K562 (cell line): ENCODE measurements at regions of chr11 and their contacts with region 1.

Region 1: DNA sequence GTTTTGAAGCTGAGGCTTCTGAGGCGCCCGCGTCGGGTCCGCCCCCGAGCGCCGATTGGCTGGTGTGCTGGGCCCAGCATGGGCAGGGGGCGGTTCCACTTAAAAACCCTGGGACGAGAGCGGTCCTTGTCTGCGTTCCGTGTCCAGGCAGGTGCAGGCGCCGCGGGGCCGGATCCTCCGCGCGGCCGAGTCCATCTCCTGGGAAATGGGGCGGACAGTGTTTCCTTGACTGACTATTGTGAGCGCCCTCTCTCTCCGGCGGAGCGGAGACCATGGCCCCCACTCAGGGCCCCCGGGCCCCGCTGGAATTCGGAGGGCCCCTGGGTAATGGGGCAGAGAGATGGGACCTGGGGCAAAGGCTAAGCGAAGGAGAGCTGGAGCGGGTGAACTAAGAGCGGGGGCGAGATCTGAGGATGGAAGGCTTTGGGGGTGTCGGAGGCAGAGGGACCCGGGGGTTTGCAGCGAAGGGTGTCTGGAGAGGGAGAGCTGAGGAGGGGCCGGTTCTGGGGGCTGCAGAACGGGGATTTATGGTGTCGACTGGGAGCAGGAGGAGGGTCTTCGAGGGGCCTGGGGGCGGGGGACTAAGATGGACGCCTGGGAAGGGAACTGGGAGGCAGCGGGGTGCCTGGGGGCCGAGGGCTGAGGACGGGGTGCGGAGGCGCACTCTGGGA is at the start of gene TM7SF2:
- DNase-seq: peak; percentile 96 to 99 (median 98)
- ATAC-seq: peak; percentile 90
- H3K4me3 ChIP-seq: peak within 1 kb of the TSS; percentile 44
- H3K27ac ChIP-seq: peak within 1 kb of the TSS; percentile 79
- H3K4me1 ChIP-seq: peaks cover 29 to 62% of the 10 kb centered on the region in 2 experiments
- H3K27me3 ChIP-seq: no peaks in the 10 kb centered on the region
- CTCF ChIP-seq: 0 out of 6 replicates have a peak, but pooled peaks of 1 of the 3 experiments have one; percentile 0
- EP300 ChIP-seq: no peak
- POLR2A ChIP-seq: peak; percentile 88
- RAD21 ChIP-seq: no peak
- polyA plus RNA-seq, gene TM7SF2: 1.2 to 1.4 TPM

Region 2: DNA sequence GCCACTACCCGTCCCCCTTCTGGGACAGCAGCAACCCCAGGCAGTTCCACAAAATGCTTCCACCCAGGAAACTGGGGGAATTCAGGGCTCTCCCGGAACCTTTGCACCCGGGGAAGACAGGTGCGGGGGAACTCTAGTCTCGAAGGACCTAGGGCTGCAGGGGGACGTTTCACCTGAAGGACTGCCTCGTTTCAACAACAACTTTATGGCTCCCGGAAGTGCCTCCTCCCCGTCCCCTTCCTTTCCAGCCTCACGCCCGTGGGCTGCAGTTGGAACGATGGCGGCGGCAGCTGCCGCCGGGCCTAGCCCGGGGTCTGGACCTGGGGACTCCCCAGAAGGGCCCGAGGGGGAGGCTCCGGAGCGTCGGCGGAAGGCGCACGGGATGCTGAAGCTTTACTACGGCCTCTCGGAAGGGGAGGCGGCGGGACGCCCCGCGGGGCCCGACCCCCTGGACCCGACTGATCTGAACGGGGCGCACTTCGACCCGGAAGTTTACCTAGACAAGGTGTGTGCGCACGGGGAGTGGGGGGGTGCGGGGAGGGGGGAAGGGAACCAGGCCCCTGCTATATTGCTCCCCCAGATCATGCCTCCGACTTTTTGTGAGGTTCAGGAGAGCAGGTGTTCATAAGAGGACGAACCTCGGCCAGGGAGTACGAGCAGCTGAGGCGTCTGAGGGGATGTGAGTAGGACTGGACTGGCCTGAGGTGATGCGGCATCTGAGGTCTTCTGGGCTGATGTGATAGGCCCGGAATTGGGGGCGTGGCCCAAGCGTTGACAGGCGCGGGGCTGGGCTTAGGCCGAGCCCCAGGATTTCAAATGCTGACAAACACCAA is 15.7 kb before region 1 on chr11 and contains the start of gene VPS51:
- CTCF ChIA-PET with region 1: no interaction called
- POLR2A ChIA-PET with region 1: interaction called, 92 read pairs
- in situ Hi-C with region 1: no loop called
- intact Hi-C with region 1: no loop called
- DNase-seq: peak; percentile 93 to 96 (median 94)
- ATAC-seq: peak; percentile 100
- H3K4me3 ChIP-seq: peak within 1 kb of the TSS; percentile 78
- H3K27ac ChIP-seq: peak within 1 kb of the TSS; percentile 81
- H3K4me1 ChIP-seq: peaks cover 11 to 14% of the 10 kb centered on the region in 2 experiments; a peak in 4 of 5 replicates
- H3K27me3 ChIP-seq: no peaks in the 10 kb centered on the region
- CTCF ChIP-seq: 0 out of 6 replicates have a peak, but pooled peaks of 1 of the 3 experiments have one; percentile 7
- EP300 ChIP-seq: peak; percentile 70
- POLR2A ChIP-seq: peak; percentile 94
- RAD21 ChIP-seq: 0 out of 4 replicates have a peak, but pooled peaks of 1 of the 2 experiments have one; percentile 14
- polyA plus RNA-seq, gene VPS51: 1.8 to 2.9 TPM

Region 3: GRCh38 chr11:65124480-65125196 is 12.8 kb after region 1 on chr11:
- CTCF ChIA-PET with region 1: interaction called, 3 read pairs
- POLR2A ChIA-PET with region 1: interaction called, 182 read pairs
- in situ Hi-C with region 1: no loop called
- intact Hi-C with region 1: no loop called
- DNase-seq: peak in 1 of 4 experiments; percentile 22
- ATAC-seq: no peak
- H3K4me3 ChIP-seq: no peak overlapping the region
- H3K27ac ChIP-seq: no peak overlapping the region; the same call in 2 of the 3 replicates
- H3K4me1 ChIP-seq: peaks cover 11 to 13% of the 10 kb centered on the region in 2 experiments; a peak in 4 of 5 replicates
- H3K27me3 ChIP-seq: no peaks in the 10 kb centered on the region
- CTCF ChIP-seq: no peak
- EP300 ChIP-seq: no peak
- POLR2A ChIP-seq: no peak
- RAD21 ChIP-seq: no peak

Region 4: GRCh38 chr11:65180877-65181568 is 69.1 kb after region 1 on chr11:
- CTCF ChIA-PET with region 1: interaction called, 19 read pairs
- POLR2A ChIA-PET with region 1: interaction called, 6 read pairs
- in situ Hi-C with region 1: no loop called
- intact Hi-C with region 1: loop called (anchors 2 kb)
- DNase-seq: peak; percentile 73 to 84 (median 80)
- ATAC-seq: peak; percentile 86
- H3K4me3 ChIP-seq: peak overlapping the region; percentile 98
- H3K27ac ChIP-seq: peak overlapping the region; percentile 77
- H3K4me1 ChIP-seq: peaks cover 11 to 44% of the 10 kb centered on the region in 2 experiments
- H3K27me3 ChIP-seq: no peaks in the 10 kb centered on the region
- CTCF ChIP-seq: peak; percentile 68 to 77 (median 70)
- EP300 ChIP-seq: no peak
- POLR2A ChIP-seq: no peak
- RAD21 ChIP-seq: peak; percentile 64 to 73

Region 5: GRCh38 chr11:65251476-65251875 is 139.6 kb after region 1 on chr11:
- CTCF ChIA-PET with region 1: interaction called, 10 read pairs
- POLR2A ChIA-PET with region 1: interaction called, 5 read pairs
- in situ Hi-C with region 1: no loop called
- intact Hi-C with region 1: loop called (anchors 2 kb)
- DNase-seq: no peak
- ATAC-seq: no peak
- H3K4me3 ChIP-seq: no peak overlapping the region
- H3K27ac ChIP-seq: no peak overlapping the region
- H3K4me1 ChIP-seq: no peaks in the 10 kb centered on the region; a peak in 1 of 5 replicates
- H3K27me3 ChIP-seq: no peaks in the 10 kb centered on the region
- CTCF ChIP-seq: no peak
- EP300 ChIP-seq: no peak
- POLR2A ChIP-seq: no peak
- RAD21 ChIP-seq: no peak

Region 6: GRCh38 chr11:65530157-65530496 is 418.2 kb after region 1 on chr11:
- CTCF ChIA-PET with region 1: no interaction called
- POLR2A ChIA-PET with region 1: no interaction called
- in situ Hi-C with region 1: no loop called
- intact Hi-C with region 1: no loop called
- DNase-seq: peak in 1 of 4 experiments; percentile 10
- ATAC-seq: peak; percentile 45; the same call in 2 of the 3 replicates
- H3K4me3 ChIP-seq: no peak overlapping the region
- H3K27ac ChIP-seq: no peak overlapping the region
- H3K4me1 ChIP-seq: peaks cover 8 to 29% of the 10 kb centered on the region in 2 experiments; a peak in 4 of 5 replicates
- H3K27me3 ChIP-seq: no peaks in the 10 kb centered on the region
- CTCF ChIP-seq: peak; percentile 26 to 52 (median 37); a peak in 5 of 6 replicates
- EP300 ChIP-seq: no peak
- POLR2A ChIP-seq: no peak
- RAD21 ChIP-seq: no peak